Pancreas (tissue), 10 donors: ENCODE measurements at regions of chr10 and their contacts with region 1.

Region 1: GRCh38 chr10:69425511-69426298 is 9.0 kb upstream of the TACR2 start:
- DNase-seq: no peak
- ATAC-seq: peak; percentile 60 to 78 (median 76)
- H3K4me3 ChIP-seq: no peak overlapping the region
- H3K27ac ChIP-seq: peak overlapping the region in 2 of 4 donors; percentile 53
- H3K4me1 ChIP-seq: peaks cover 0 to 6% (median 4%) of the 10 kb centered on the region in 3 donors
- H3K27me3 ChIP-seq: no peaks in the 10 kb centered on the region
- CTCF ChIP-seq: no peak

Region 2: DNA sequence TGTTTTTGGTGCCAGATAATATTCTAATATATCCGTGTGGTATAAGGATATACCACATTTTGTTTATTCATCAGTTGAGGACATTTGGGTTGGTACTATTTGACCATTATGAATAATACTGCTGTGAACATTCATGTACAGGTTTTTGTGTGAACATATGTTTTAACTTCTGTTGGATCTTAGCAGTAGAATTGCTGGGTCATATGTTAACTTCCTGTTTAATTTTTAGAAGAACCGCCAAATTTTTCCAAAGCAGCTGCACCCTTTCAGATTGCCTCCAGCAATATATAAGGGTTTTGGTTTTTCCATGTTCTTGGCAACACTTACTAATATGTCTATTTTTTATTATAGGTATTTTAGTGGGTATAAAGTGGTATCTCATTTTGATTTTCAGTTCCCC is 278.9 kb before region 1 on chr10:
- intact Hi-C with region 1: no loop called
- DNase-seq: no peak
- ATAC-seq: no peak
- H3K4me3 ChIP-seq: no peak overlapping the region
- H3K27ac ChIP-seq: no peak overlapping the region
- H3K4me1 ChIP-seq: peaks cover 0 to 3% (median 0%) of the 10 kb centered on the region in 3 donors
- H3K27me3 ChIP-seq: no peaks in the 10 kb centered on the region
- CTCF ChIP-seq: no peak

Region 3: GRCh38 chr10:69172241-69172982 is 253.3 kb before region 1 on chr10:
- intact Hi-C with region 1: no loop called
- DNase-seq: no peak
- ATAC-seq: no peak
- H3K4me3 ChIP-seq: no peak overlapping the region
- H3K27ac ChIP-seq: no peak overlapping the region
- H3K4me1 ChIP-seq: no peaks in the 10 kb centered on the region
- H3K27me3 ChIP-seq: no peaks in the 10 kb centered on the region
- CTCF ChIP-seq: no peak

Region 4: GRCh38 chr10:69506834-69507721 is 81.4 kb after region 1 on chr10:
- intact Hi-C with region 1: loop called in 2 of 3 experiments (anchors 5 kb)
- DNase-seq: no peak
- ATAC-seq: peak; percentile 14 to 25 (median 22)
- H3K4me3 ChIP-seq: peak overlapping the region in 1 of 4 donors; percentile 28
- H3K27ac ChIP-seq: peak overlapping the region in 2 of 4 donors; percentile 30 to 50
- H3K4me1 ChIP-seq: no peaks in the 10 kb centered on the region
- H3K27me3 ChIP-seq: no peaks in the 10 kb centered on the region
- CTCF ChIP-seq: no peak

Region 5: GRCh38 chr10:69600761-69601330 is 175.1 kb after region 1 on chr10:
- intact Hi-C with region 1: no loop called
- DNase-seq: no peak
- ATAC-seq: no peak
- H3K4me3 ChIP-seq: no peak overlapping the region
- H3K27ac ChIP-seq: no peak overlapping the region
- H3K4me1 ChIP-seq: no peaks in the 10 kb centered on the region
- H3K27me3 ChIP-seq: peaks cover 0 to 5% (median 0%) of the 10 kb centered on the region in 4 donors
- CTCF ChIP-seq: no peak